ENCODE measurements at regions of chr6 and their contacts with region 1.

Region 1: GRCh38 chr6:33248925-33249731 is 22.5 kb downstream of the VPS52 start:
- DNase-seq: peak; percentile 98 to 99 (median 98)
- ATAC-seq: peak; percentile 94
- H3K4me3 ChIP-seq: peak overlapping the region; percentile 23 to 26
- H3K27ac ChIP-seq: peak overlapping the region; percentile 84 to 95 (median 94)
- H3K4me1 ChIP-seq: peaks cover 22% of the 10 kb centered on the region
- H3K27me3 ChIP-seq: no peaks in the 10 kb centered on the region
- CTCF ChIP-seq: peak in 3 of 7 experiments; percentile 15 to 38 (median 16)
- POLR2A ChIP-seq: peak; percentile 57 to 97 (median 93)

Region 2: GRCh38 chr6:33112148-33112547 is 137.0 kb before region 1 on chr6:
- intact Hi-C with region 1: loop called (anchors 10 kb)
- DNase-seq: peak in 1 of 4 donors; percentile 54
- ATAC-seq: peak; percentile 88
- H3K4me3 ChIP-seq: no peak overlapping the region
- H3K27ac ChIP-seq: no peak overlapping the region
- H3K4me1 ChIP-seq: peaks cover 4% of the 10 kb centered on the region
- H3K27me3 ChIP-seq: peaks cover 0 to 7% of the 10 kb centered on the region in 2 donors
- CTCF ChIP-seq: no peak
- POLR2A ChIP-seq: no peak

Region 3: DNA sequence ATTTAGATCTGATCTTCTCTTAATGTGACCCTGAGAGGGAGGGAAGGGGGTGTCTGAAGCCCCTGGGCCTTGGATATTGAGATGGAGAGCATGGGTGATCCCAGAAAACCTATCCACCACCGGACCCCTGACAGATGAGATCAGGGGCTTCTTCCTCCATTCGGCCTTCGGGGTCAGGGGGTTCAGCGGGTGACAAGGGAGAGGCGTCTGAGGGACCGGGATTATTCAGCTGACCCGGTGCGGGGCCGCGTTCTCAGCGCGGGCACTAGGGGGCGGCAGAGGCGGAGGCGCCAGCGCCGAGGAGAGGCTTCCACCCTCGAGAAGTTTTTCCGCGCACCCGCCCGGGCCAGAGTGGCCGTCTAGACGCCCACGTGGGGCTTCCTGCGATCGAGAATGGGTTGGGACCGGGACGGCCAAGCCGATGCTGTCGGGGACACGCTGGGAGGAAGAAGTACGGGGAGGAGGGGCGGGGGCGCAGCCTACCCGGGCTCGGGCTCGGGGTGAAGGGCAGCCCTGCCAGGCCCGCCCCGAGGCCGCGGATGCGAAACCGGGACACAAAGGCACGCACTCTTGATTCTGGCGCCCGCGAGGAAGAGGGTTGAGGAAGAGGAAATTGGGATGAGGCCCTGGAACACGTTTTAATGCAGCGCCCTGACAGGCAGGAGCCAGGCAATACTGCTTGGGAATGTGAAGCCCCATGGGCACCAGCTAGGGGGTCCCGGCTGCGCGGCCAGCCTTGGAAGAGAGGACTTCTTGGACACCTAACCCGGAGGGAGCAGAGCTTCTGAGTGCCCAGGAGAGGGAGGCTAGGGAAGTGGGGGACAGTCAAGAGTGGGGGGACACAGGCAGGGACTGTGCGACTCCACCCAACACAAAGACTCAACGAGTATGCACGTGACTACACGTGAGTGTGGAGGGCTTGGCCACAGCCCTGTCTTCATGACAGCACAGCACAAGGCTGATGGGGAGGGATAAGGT is 87.5 kb before region 1 on chr6:
- intact Hi-C with region 1: loop called (anchors 5 kb)
- DNase-seq: peak; percentile 76 to 81 (median 78)
- ATAC-seq: peak; percentile 93
- H3K4me3 ChIP-seq: peak overlapping the region; percentile 9 to 33
- H3K27ac ChIP-seq: peak overlapping the region in 2 of 4 donors; percentile 34 to 36
- H3K4me1 ChIP-seq: peaks cover 13% of the 10 kb centered on the region
- H3K27me3 ChIP-seq: no peaks in the 10 kb centered on the region
- CTCF ChIP-seq: peak; percentile 89 to 98 (median 94)
- POLR2A ChIP-seq: no peak

Region 4: DNA sequence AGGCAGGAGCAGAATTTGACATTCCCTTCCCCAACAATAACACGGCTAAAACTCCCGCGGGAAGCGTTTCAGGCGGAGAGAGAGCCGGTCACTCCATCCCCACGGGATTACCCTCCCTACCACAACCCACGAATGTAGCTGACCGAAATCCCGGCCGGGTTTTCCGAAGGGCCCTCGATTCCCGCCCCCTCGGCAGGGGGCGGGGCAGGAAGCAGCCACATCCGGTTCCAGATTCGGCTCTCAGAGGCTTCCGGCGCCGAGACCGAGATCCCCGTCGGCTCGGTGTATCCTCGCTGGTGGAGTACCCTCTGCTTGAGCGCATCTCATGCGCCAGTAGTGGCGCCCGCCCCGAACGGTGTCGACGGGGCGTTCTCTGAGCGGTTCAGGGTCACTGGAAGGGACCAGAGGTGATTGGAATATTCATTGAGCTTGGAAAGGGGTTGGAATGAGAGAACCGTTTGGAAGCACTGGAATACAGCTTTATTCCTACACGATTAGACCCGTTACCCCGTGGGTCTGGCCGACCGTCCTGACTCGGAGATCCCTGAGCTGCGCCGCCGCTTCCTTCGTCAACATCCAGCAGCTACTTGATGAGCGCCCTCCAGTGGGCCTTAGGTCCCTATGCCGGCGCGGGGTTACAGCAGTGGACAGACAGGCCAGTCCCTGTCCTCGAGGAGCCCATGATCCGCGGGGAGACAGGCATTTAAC is 50.3 kb after region 1 on chr6:
- intact Hi-C with region 1: no loop called
- DNase-seq: peak; percentile 90 to 92 (median 90)
- ATAC-seq: peak; percentile 82
- H3K4me3 ChIP-seq: peak overlapping the region; percentile 44 to 85
- H3K27ac ChIP-seq: peak overlapping the region; percentile 83 to 99 (median 89)
- H3K4me1 ChIP-seq: peaks cover 26% of the 10 kb centered on the region
- H3K27me3 ChIP-seq: no peaks in the 10 kb centered on the region
- CTCF ChIP-seq: peak; percentile 25 to 75 (median 59)
- POLR2A ChIP-seq: peak in 2 of 3 donors; percentile 76 to 80

Region 5: DNA sequence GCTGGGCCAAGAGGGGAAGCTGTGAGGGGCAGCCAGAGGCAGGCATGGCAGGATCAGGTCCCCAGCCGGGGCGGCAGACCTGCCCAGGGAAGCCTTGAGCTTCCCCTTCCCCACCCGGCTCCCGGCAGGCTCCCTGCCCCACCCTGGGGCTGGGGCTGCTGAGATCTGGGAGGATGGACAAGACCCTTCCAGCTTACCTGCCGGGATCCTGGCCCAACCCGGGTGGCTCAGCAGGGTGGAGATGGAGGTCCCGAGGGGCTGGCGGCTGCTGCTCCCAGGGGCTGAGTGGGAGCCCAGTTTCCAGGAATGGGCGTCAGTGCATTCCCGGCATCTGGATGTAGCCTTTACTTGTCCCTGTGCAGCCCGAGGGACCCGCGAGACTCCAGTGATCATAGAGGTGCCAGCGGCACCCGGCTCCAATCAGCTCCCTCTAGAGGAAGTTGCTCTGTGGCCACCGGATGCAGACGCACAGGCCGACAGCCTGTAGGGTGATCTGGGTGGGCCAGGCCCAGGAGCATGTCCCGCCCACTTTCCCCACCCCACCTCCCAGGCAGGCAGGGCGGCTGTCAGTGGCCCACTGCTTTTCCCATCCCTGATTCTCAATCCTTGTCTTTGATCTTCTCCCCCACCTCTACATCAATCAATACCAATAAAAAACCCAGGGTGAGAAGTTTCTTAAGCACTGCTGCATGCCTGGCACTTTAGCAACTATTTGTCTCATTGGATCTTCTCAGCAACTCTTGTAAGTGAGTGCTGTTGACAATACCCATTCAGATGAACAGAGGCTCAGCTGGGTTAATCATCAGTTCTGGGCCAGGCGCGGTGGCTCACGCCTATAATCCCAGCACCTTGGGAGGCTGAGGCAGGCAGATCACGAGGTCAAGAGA is 330.9 kb after region 1 on chr6 and contains the start of gene BAK1:
- intact Hi-C with region 1: no loop called
- DNase-seq: peak; percentile 82 to 93 (median 92)
- ATAC-seq: peak; percentile 93
- H3K4me3 ChIP-seq: peak within 1 kb of the TSS; percentile 54 to 90
- H3K27ac ChIP-seq: peak within 1 kb of the TSS; percentile 62 to 83 (median 81)
- H3K4me1 ChIP-seq: peaks cover 32% of the 10 kb centered on the region
- H3K27me3 ChIP-seq: no peaks in the 10 kb centered on the region
- CTCF ChIP-seq: peak; percentile 23 to 66 (median 52)
- POLR2A ChIP-seq: peak; percentile 52 to 84 (median 80)
- total RNA-seq, gene BAK1: 2.3 to 5.7 TPM